Common myeloid progenitor, CD34-positive (primary cell): ENCODE measurements at regions of chr7 and their contacts with region 1.

Region 1: GRCh38 chr7:152508701-152509100 is 72.9 kb upstream of the KMT2C start:
- DNase-seq: no peak
- H3K4me3 ChIP-seq: no peak overlapping the region
- H3K27ac ChIP-seq: no peak overlapping the region
- H3K4me1 ChIP-seq: peaks cover 0 to 9% (median 7%) of the 10 kb centered on the region in 4 experiments
- H3K27me3 ChIP-seq: no peaks in the 10 kb centered on the region

Region 2: GRCh38 chr7:152495867-152496266 is 12.8 kb before region 1 on chr7:
- CTCF ChIA-PET with region 1: interaction called, 10 read pairs
- POLR2A ChIA-PET with region 1: no interaction called
- DNase-seq: no peak
- H3K4me3 ChIP-seq: no peak overlapping the region
- H3K27ac ChIP-seq: no peak overlapping the region
- H3K4me1 ChIP-seq: no peaks in the 10 kb centered on the region
- H3K27me3 ChIP-seq: no peaks in the 10 kb centered on the region

Region 3: GRCh38 chr7:152683297-152683696 is 174.6 kb after region 1 on chr7:
- CTCF ChIA-PET with region 1: no interaction called
- POLR2A ChIA-PET with region 1: no interaction called
- DNase-seq: no peak
- H3K4me3 ChIP-seq: no peak overlapping the region
- H3K27ac ChIP-seq: no peak overlapping the region
- H3K4me1 ChIP-seq: peaks cover 0 to 3% (median 0%) of the 10 kb centered on the region in 4 experiments
- H3K27me3 ChIP-seq: no peaks in the 10 kb centered on the region